GM18951 (cell line): ENCODE measurements at regions of chr1 and their contacts with region 1.

Region 1: GRCh38 chr1:26602378-26602959 is 72.9 kb downstream of the RPS6KA1 start:
- POLR2A ChIP-seq: no peak

Region 2: DNA sequence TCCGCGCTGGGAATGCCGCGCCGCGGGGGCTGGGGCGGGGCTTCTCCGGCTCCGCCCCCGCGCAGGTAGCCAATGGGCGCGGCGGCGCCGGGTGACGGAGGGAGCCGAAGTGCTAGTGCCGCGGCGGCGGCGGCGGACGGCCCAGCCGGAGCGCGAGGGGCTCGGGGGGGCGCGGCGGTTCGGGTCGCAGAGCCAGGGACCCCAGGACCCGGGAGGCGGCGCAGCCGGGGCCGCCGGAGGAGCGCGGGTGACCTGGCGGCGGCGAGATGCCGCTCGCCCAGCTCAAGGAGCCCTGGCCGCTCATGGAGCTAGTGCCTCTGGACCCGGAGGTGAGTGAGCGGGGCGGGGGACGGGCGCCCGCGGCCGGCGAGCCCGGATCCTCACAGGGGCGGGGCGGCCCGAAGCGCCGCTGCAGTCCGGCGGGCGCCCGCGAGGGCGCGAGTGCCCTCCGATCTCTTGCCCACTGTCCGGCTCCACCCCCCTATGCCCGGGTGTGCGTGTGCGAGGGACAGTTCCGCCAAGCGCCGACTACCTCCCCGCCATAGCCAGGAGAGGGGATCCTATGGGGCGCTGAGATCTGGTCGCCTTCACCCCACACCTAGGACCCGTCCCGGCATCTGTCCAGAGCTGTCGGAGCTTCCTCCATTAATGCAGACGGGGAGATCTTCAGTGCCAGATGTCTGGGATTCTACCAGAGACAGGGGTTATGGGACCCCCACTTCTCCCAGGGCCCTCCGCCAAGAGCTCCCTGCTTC is 72.6 kb before region 1 on chr1 and contains the start of gene RPS6KA1:
- in situ Hi-C with region 1: no loop called
- POLR2A ChIP-seq: peak; percentile 69

Region 3: GRCh38 chr1:26799479-26800142 is 197.1 kb after region 1 on chr1:
- in situ Hi-C with region 1: loop called (anchors 10 kb)
- POLR2A ChIP-seq: no peak

Region 4: DNA sequence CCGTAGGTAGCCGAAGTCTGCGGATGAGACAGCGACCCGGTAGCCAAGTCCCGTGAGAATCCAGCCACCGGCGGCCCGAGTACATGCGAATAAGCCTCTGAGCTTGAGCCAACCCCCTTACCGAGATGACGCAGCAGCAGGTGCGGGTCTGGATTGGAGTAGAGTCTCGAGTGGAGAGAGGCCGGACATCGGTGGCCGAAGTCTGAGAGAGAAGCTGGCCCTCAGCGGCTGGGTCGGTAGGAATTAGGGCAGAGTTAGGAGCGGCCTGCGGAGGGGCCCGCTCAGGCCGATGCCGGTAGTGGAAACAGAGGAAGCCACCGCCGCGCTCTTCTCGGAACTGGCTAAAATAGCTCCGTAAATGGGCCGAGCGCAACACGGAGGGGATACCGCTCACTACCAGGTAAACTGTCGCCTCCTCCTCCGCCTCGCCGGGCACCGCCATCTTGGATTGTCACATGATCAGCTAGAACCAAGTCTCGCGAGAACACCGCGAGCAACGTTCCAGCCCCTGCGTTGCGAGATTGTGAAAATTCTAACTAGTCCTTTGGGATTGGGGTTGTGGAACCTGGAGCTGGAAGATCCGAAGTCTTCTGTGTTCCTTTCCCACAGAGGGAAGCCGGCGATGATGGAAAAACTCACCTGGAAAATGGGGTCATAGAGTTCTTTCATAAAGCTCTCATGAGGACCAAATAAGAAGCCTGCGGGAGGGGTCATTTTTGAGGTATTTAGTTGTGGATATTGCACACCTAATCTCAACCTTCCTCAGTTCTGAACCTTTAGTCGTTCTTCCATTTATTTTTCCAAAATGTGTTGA is 297.7 kb after region 1 on chr1 and contains the start of gene GPATCH3:
- in situ Hi-C with region 1: no loop called
- POLR2A ChIP-seq: peak; percentile 87

Region 5: GRCh38 chr1:26959722-26960615 is 357.5 kb after region 1 on chr1 and contains the start of gene KDF1:
- in situ Hi-C with region 1: no loop called
- POLR2A ChIP-seq: no peak

Region 6: DNA sequence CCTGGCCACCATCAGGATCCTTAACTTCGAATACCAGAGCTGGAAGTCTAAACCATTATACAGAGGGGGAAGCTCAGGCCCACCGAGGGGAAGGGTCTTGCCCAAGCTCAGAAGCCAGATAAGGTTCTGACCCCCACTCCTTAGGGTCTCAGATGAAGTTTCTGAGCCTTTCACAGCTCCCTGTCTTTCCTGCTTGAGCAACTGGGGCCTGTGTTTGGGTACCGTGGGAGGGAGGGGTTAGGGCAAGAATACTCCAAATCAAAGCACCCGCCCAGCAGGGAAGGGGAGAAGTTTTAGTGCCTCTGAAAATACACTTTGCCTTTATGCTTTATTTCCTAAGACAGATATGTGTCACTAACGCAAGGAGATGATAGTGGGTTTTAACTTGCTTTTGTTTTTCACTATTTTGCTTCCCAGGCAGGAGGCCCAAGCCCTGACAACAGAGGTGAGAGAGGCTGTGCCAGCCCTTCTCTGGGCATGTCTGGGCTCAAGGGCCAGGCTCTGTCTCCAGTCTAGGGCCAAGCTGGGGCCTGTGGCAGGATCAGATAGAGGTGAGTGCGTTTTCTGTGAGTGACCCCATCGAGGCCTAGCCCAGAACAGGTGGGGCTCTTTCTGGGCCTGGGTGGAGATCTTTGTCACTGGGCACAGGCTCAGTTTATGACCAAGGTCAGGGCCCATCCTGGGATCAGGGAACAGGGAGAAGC is 430.7 kb after region 1 on chr1:
- in situ Hi-C with region 1: no loop called
- POLR2A ChIP-seq: no peak